Dendritic cell treated with granulocyte-macrophage colony-stimulating factor and Interleukin-4, amounts not matched to agents 40 ng/mL and 50 ng/mL, for 4 days (primary cell): ENCODE measurements at regions of chr2 and their contacts with region 1.

Region 1: GRCh38 chr2:166057370-166058164 is 70.3 kb downstream of the SCN1A start:
- H3K4me3 Mint-ChIP-seq: no peak overlapping the region
- H3K27ac Mint-ChIP-seq: no peak overlapping the region
- H3K4me1 Mint-ChIP-seq: no peaks in the 10 kb centered on the region
- H3K27me3 Mint-ChIP-seq: no peaks in the 10 kb centered on the region

Region 2: DNA sequence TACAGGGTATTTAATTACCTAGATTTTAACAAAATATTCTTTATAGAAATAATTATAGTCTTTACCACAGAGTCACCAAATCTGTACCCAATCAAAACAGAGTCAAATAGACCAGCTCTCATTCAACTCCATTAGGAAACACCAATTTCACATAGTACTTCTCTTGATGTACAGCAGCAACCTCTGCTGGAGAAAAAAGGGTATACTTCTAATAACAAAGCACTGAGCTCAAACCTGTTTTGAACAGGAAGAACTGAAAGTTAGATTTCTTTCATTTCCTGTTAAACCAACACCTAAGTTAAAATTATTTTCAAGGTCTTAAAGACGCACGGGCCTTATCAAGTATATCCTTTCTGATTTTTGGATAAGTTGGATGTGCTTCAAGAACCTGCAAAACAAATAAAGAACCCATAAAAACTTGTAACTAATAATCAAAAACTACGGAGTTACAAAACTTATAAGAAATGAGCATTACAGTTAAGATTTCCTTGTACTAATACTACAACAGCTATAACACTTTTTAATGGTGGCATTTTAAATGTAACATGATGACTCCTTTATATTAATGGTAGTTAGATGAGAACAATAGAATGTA is 183.0 kb before region 1 on chr2:
- intact Hi-C with region 1: no loop called
- H3K4me3 Mint-ChIP-seq: no peak overlapping the region
- H3K27ac Mint-ChIP-seq: no peak overlapping the region
- H3K4me1 Mint-ChIP-seq: peaks cover 14% of the 10 kb centered on the region
- H3K27me3 Mint-ChIP-seq: no peaks in the 10 kb centered on the region

Region 3: GRCh38 chr2:166013878-166014277 is 43.7 kb before region 1 on chr2:
- intact Hi-C with region 1: no loop called
- H3K4me3 Mint-ChIP-seq: no peak overlapping the region
- H3K27ac Mint-ChIP-seq: no peak overlapping the region
- H3K4me1 Mint-ChIP-seq: no peaks in the 10 kb centered on the region
- H3K27me3 Mint-ChIP-seq: no peaks in the 10 kb centered on the region

Region 4: DNA sequence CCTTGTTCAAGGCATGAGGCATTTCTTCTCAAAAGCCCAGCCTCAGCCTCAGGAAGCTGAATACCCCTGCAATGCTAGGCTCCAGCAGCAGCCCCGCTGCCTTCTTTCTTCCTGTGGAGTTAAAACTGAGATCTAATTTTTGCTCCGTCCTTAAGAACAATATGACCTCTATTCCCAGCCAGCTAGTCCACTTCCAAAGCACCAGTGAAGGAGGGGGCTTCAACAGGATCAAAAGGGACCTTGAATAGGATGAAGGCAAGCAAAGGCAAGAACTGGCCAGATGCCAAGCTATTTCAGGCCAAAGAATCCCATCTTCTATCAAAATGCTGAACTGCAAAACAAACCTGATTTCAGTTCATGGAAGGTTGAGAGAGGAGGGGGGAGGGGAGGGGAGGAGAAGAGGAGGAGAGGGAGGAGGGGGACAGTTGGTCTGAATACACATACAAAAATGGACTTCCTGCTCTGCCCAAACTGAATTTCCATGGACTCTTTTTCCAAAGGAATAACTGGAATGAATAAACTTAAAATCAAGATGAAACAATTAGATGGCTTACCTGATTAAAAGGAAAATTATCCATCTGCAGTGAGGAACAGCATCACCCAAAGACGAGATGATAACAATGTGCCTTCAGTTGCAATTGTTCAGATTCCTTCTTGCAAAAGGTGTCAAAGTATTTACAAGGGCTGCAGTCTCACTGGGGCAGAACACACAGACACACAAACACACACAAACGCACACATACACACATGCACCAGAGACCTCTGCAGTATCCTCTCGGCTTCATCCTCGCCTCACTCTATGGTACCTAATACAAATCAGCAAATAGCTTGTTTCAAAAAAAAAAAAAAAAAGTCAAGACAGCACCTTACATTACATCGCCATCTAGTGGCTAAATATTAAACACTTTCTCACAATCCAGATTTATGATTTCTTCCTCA is 69.9 kb after region 1 on chr2 and contains the start of gene SCN1A:
- intact Hi-C with region 1: loop called (anchors 1 kb)
- H3K4me3 Mint-ChIP-seq: no peak within 1 kb of the TSS
- H3K27ac Mint-ChIP-seq: no peak within 1 kb of the TSS
- H3K4me1 Mint-ChIP-seq: no peaks in the 10 kb centered on the region
- H3K27me3 Mint-ChIP-seq: peaks cover 4% of the 10 kb centered on the region

Region 5: DNA sequence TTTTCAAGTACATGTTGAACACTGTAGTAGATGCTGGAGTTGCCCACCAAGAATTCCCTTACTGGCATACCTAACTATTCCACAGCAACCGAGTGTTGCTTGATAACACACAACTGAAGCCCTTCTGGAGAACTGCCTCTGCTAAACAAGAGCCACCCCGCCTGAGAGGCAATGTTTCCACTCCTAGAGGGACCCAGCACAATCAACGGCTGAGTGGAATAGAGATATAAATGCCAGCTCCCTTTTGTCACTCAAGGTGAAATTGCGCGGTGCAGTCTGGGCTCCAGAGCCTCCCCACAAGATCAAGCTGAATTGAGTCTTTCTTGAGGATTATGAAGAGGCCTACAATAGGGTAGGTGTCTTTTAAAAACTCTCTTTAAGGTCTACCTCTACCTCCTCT is 367.3 kb after region 1 on chr2:
- intact Hi-C with region 1: loop called (anchors 5 kb)
- H3K4me3 Mint-ChIP-seq: no peak overlapping the region
- H3K27ac Mint-ChIP-seq: no peak overlapping the region
- H3K4me1 Mint-ChIP-seq: peaks cover 5% of the 10 kb centered on the region
- H3K27me3 Mint-ChIP-seq: no peaks in the 10 kb centered on the region

Region 6: DNA sequence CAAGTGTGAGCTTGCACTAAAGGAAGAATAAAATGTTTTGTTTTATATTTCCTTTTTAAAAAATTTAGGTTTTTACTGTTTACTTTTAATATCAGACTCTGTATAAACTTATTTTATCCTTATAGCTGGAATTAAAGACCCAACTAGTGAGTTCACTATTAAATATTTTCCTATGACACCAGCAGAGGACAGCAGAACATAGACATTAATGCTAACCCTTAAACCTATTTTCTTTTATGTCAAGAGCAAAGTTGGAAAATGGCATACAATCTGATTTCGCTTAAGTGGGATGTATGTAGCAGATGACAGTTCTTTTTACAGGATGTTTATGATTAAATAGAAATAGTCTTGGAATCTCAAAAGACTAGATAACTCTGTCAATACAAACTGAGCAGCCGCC is 642.5 kb after region 1 on chr2:
- intact Hi-C with region 1: no loop called
- H3K4me3 Mint-ChIP-seq: no peak overlapping the region
- H3K27ac Mint-ChIP-seq: no peak overlapping the region
- H3K4me1 Mint-ChIP-seq: no peaks in the 10 kb centered on the region
- H3K27me3 Mint-ChIP-seq: no peaks in the 10 kb centered on the region